ENCODE measurements at regions of chr7 and their contacts with region 1.

Region 1: DNA sequence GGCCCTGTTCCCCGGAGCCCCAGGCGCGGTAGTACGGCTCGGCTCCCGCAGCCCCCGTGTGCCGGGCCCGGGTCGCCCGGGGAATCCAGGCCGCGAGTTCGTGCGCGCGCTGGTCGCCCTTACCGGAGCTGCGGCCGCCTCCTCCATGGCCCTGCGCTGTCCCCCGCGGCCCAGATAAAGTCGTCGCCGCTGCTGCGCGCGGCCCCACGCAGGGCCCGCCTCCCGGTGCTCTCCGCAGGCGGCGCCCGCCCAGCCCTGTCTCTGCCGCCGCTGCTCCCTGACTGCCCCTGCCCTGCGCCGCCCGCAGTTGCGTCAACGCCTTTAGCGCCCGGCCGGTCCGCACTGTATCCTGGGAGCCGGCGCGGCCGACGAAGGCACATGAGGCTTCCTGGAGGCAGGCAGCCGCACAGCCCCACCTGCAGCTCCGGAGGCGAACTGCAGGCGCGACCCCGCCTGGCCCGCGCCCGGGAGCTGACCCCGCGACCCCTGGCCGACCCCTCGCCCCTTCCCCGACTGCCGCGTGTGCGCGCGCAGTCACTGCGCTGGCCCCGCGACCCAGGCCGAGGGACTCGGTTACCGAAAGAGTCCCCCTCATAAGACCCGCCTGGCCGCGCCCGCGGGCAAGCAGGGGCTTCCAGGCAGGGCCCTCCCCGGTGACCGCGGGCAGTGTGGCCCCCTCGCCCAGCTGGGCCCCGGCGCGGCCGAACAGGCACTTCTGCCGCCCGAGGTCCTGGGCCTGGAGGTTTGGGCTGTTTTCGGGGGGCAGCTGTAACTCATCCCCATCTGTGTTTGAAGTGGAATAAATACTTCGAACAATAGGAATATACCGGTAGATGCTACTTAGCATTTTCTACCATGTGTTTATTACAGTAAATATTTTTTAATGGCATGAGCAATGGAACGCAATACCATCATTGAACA is 127.1 kb upstream of the ZNF746 start:
- DNase-seq: peak; percentile 85 to 93 (median 89)
- H3K4me3 ChIP-seq: peak overlapping the region; percentile 99
- H3K27ac ChIP-seq: peak overlapping the region; percentile 70
- H3K4me1 ChIP-seq: peaks cover 3% of the 10 kb centered on the region
- H3K27me3 ChIP-seq: no peaks in the 10 kb centered on the region
- CTCF ChIP-seq: peak; percentile 94 to 99 (median 94)
- EP300 ChIP-seq: no peak
- POLR2A ChIP-seq: peak; percentile 54

Region 2: GRCh38 chr7:149261829-149262617 is 362.7 kb before region 1 on chr7 and contains the start of gene ZNF783:
- intact Hi-C with region 1: loop called in 1 of 4 experiments (anchors 10 kb)
- DNase-seq: peak; percentile 85 to 94 (median 87)
- H3K4me3 ChIP-seq: peak within 1 kb of the TSS; percentile 63
- H3K27ac ChIP-seq: peak within 1 kb of the TSS; percentile 46 to 92
- H3K4me1 ChIP-seq: no peaks in the 10 kb centered on the region
- H3K27me3 ChIP-seq: no peaks in the 10 kb centered on the region
- CTCF ChIP-seq: peak; percentile 59 to 97 (median 93)
- EP300 ChIP-seq: no peak
- POLR2A ChIP-seq: peak; percentile 28
- total RNA-seq, gene ZNF783: 11.6 to 27.6 (median 21.2) TPM

Region 3: DNA sequence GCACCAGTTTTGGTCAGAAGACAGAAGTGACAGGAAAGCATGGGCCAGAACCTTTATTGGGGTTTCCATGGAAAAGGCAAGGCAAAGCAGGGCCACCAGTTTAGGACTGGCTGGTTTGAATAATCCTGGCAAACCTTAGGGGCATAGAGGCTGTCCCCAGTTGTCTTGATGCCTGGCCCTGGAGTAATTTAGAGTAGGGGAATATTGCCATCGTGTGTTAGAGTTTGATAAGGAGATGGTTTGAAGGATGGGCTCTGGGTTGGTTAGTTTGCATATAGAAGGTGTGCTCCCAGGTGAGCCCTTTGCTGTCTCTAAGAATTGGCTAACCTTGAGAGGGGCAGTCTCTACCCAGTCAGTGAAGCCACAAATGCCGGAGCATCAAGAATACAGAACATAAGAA is 243.4 kb before region 1 on chr7:
- intact Hi-C with region 1: no loop called
- DNase-seq: no peak
- H3K4me3 ChIP-seq: no peak overlapping the region
- H3K27ac ChIP-seq: no peak overlapping the region
- H3K4me1 ChIP-seq: no peaks in the 10 kb centered on the region
- H3K27me3 ChIP-seq: no peaks in the 10 kb centered on the region
- CTCF ChIP-seq: no peak
- EP300 ChIP-seq: no peak
- POLR2A ChIP-seq: no peak

Region 4: GRCh38 chr7:149409895-149410294 is 214.8 kb before region 1 on chr7:
- intact Hi-C with region 1: no loop called
- DNase-seq: no peak
- H3K4me3 ChIP-seq: no peak overlapping the region
- H3K27ac ChIP-seq: no peak overlapping the region
- H3K4me1 ChIP-seq: no peaks in the 10 kb centered on the region
- H3K27me3 ChIP-seq: no peaks in the 10 kb centered on the region
- CTCF ChIP-seq: no peak
- EP300 ChIP-seq: no peak
- POLR2A ChIP-seq: no peak

Region 5: DNA sequence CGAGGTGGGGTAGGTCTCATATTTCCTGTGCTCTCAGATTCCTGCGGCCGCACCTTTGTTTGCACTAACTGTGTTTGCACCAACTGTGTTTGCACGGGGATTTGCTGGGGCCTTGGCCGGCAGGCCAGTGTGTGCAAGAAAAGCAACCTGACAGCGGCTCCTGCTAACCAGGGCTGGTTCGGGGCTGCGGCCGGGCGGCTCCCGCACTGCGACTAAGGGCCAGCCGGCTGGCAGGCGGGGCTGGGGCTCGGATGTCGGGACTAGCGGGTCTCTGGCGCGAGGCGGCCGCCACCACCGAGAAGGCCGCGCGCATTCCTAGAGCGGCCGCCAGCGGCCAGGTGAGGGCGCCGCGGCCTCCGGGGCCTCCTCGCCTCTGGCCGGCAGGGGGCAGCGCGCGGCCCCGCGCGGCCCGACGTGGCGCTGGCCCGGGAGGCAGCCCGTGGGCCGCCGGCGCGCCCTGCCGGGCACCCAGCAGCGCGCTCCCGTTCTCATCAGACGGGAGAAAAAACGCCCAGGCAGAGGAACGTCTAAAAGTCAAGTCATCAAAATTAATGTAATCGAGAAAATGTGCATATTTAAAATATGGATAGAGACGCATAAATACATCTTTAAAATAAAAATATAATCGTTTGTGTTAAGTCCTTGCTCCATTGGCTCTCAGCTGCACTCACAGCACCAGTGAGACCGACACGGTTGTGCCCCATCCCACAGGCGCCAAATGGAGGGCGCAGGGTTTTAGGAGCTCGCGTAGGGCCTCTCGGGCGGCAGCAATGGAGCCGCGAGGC is 202.4 kb before region 1 on chr7:
- intact Hi-C with region 1: loop called in 1 of 4 experiments (anchors 5 kb)
- DNase-seq: peak; percentile 44 to 71 (median 49)
- H3K4me3 ChIP-seq: peak overlapping the region; percentile 35
- H3K27ac ChIP-seq: peak overlapping the region in 1 of 2 donors; percentile 42
- H3K4me1 ChIP-seq: peaks cover 3% of the 10 kb centered on the region
- H3K27me3 ChIP-seq: no peaks in the 10 kb centered on the region
- CTCF ChIP-seq: peak in 2 of 3 donors; percentile 43 to 73
- EP300 ChIP-seq: no peak
- POLR2A ChIP-seq: no peak

Region 6: GRCh38 chr7:149497456-149498261 is 127.0 kb before region 1 on chr7 and contains the start of gene ZNF746:
- intact Hi-C with region 1: loop called in 1 of 4 experiments (anchors 5 kb)
- DNase-seq: peak; percentile 55 to 77 (median 65)
- H3K4me3 ChIP-seq: peak within 1 kb of the TSS; percentile 59
- H3K27ac ChIP-seq: peak within 1 kb of the TSS; percentile 93 to 94
- H3K4me1 ChIP-seq: peaks cover 6% of the 10 kb centered on the region
- H3K27me3 ChIP-seq: no peaks in the 10 kb centered on the region
- CTCF ChIP-seq: peak in 2 of 3 donors; percentile 59 to 72
- EP300 ChIP-seq: no peak
- POLR2A ChIP-seq: peak; percentile 32
- total RNA-seq, gene ZNF746: 13.1 to 19.3 (median 17.4) TPM